ENCODE measurements at regions of chr12 and their contacts with region 1.

Region 1: DNA sequence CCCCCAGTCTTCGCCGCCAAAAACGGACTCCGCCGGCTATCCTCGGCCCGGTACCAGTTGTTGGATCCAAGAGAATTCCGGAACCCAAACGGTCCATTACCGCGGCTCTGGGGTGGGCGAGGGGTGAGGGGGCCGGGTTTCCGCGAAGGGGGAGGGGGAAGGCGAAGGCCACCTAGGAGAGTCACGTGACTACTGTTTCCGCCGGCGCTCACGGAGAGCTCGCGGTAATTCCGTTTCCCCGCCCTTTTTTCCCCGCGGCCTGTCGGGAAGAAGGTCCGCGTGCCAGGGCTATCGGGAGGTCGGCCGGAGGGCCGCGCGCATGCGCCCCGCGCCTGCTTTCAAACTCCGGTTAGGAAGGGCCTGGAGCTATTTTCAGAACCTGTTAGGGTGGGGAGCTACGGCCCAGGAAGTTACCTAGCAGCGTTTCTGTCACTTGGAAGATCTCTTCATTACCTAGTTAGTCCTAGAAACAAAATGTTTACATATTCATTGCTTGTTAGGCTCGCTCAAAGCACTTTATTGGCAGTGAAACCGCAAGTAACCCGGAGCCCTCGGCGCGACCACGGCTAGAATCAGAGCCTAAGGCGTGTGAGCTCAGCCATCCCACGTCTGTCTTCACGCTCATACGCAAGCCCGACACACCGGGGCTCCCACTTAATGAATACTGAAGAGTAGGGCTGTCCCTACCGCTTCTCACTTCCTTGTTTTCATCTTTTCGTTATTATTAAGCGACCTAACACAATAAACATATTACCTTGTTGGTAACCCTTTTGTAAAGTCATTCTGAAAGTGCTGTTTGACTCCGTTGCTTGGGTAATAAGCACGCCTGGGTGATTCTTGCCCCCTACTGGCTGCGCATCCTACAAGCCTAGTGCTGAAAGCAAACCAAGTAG is 624 bp upstream of the SBNO1 start:
- DNase-seq: peak; percentile 98
- ATAC-seq: peak; percentile 82
- H3K4me3 Mint-ChIP-seq: peak overlapping the region; percentile 86
- H3K27ac Mint-ChIP-seq: peak overlapping the region; percentile 98
- H3K4me1 Mint-ChIP-seq: peaks cover 19% of the 10 kb centered on the region
- H3K27me3 Mint-ChIP-seq: no peaks in the 10 kb centered on the region

Region 2: DNA sequence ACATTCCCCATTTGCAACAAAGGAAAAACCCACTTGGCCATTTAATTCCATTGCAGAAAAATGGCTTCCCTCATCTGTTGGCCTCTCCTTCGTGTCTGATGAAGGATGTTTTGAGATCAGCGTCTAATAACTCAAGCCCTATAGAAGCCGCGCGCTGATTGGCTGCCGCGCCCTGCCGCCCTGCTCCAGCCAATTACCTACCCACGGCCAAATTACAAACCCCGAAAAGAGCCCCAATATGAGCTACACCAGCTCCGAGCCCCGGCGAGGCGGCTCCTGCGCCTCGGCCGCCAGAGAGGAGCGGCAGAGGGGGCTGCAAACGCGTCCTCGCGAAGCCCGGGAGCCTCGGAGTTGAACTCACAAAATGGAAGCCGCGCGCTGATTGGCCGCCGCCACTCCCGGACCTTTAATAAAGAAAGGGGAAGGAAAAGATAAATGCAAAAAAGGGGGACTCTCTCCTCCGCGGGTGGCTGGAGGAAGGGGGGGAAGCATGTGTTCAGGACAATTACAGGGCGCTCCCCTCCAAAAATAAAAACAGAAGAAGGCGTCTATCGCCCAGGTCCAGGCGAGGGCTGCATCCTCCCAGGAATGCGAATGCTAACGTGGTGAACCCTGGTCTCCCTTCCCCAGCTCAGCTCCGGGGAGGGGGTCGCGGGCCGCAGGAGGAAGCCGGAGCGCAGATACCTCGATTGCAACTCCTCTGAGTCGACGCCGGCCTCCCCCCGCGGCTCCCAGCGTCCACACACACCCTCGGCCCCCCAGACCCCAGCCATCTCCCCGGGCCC is 1562.2 kb before region 1 on chr12:
- CTCF ChIA-PET with region 1: no interaction called
- POLR2A ChIA-PET with region 1: no interaction called
- intact Hi-C with region 1: loop called in 1 of 2 experiments (anchors 10 kb)
- DNase-seq: peak; percentile 95
- ATAC-seq: peak; percentile 62
- H3K4me3 Mint-ChIP-seq: peak overlapping the region; percentile 88
- H3K27ac Mint-ChIP-seq: peak overlapping the region; percentile 99
- H3K4me1 Mint-ChIP-seq: peaks cover 30% of the 10 kb centered on the region
- H3K27me3 Mint-ChIP-seq: no peaks in the 10 kb centered on the region

Region 3: DNA sequence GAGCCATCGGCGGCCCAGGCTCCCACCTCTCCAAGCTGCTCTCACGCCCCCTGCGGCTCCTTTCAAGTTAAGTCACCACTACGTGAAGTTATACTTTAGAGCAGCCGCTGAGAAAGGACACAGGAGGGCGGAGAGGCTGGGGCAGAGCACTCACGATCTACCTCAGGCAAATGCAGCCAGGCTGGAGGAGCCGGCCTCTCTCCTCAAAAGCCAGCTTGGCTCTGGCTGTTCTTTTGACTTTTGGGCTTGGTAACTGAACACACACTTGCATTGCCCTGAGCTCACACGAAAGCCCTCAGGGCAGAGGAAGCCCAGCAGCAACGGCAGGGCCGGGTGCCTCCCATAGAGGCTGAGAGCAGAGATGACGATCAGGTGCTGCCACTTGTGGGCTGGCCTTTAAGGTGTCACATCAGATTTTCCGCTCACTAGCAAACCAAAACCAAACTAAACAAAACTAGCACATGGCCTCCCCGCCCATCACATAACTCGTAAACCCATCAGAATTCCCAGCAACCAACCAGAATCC is 289.6 kb before region 1 on chr12:
- CTCF ChIA-PET with region 1: no interaction called
- POLR2A ChIA-PET with region 1: interaction called, 3 read pairs
- intact Hi-C with region 1: loop called in 1 of 2 experiments (anchors 1 kb)
- DNase-seq: peak; percentile 87
- ATAC-seq: peak; percentile 75
- H3K4me3 Mint-ChIP-seq: peak overlapping the region; percentile 68
- H3K27ac Mint-ChIP-seq: peak overlapping the region; percentile 94
- H3K4me1 Mint-ChIP-seq: peaks cover 56% of the 10 kb centered on the region
- H3K27me3 Mint-ChIP-seq: no peaks in the 10 kb centered on the region

Region 4: DNA sequence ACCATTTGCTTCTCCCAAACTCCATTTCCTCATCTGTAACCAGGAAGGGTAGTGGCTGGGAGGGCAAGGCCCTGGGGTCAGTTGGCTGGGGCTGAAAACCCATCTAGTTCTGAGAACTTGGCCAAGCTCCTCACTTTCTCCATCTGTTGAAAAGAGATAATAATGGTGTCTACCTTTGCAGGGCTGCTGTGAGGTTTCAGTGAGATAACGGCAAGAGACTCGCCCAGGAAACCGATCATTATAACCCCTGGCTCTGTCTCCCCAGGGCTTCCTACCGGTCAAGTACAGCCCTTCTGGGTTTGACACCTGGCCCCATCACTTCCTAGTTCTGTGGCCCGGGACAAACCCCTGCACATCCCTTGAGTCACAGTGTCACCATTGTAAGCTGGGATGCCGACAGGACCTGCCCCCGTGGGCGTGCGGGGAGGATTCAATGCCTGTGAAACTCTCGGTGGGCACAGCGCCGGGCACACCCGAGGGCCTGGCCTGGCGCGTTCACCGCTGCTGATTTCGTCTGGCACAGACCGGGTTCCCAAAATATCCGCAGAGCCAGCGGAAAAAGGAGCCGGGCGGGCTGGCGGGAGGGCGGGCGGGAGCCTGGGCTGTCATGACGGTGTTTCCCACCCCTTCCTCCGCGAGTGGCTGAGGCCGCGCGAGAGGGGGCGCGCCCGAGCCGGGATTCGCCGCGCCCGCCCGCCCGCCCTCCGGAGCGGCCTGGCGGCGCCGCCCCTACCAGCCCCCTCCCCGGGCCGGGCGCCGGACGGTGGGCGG is 23.1 kb after region 1 on chr12:
- CTCF ChIA-PET with region 1: interaction called, 20 read pairs
- POLR2A ChIA-PET with region 1: interaction called, 35 read pairs
- intact Hi-C with region 1: loop called (anchors 1 kb)
- DNase-seq: peak; percentile 86
- ATAC-seq: peak; percentile 43
- H3K4me3 Mint-ChIP-seq: peak overlapping the region; percentile 76
- H3K27ac Mint-ChIP-seq: peak overlapping the region; percentile 81
- H3K4me1 Mint-ChIP-seq: peaks cover 35% of the 10 kb centered on the region
- H3K27me3 Mint-ChIP-seq: no peaks in the 10 kb centered on the region

Region 5: GRCh38 chr12:123457980-123458783 is 92.9 kb after region 1 on chr12 and contains the start of gene SNRNP35:
- CTCF ChIA-PET with region 1: interaction called, 3 read pairs
- POLR2A ChIA-PET with region 1: interaction called, 4 read pairs
- intact Hi-C with region 1: loop called in 1 of 2 experiments (anchors 1 kb)
- DNase-seq: peak; percentile 88
- ATAC-seq: peak; percentile 73
- H3K4me3 Mint-ChIP-seq: peak within 1 kb of the TSS; percentile 98
- H3K27ac Mint-ChIP-seq: peak within 1 kb of the TSS; percentile 100
- H3K4me1 Mint-ChIP-seq: peaks cover 26% of the 10 kb centered on the region
- H3K27me3 Mint-ChIP-seq: no peaks in the 10 kb centered on the region
- total RNA-seq, gene SNRNP35: 24.1 to 24.8 TPM

Region 6: DNA sequence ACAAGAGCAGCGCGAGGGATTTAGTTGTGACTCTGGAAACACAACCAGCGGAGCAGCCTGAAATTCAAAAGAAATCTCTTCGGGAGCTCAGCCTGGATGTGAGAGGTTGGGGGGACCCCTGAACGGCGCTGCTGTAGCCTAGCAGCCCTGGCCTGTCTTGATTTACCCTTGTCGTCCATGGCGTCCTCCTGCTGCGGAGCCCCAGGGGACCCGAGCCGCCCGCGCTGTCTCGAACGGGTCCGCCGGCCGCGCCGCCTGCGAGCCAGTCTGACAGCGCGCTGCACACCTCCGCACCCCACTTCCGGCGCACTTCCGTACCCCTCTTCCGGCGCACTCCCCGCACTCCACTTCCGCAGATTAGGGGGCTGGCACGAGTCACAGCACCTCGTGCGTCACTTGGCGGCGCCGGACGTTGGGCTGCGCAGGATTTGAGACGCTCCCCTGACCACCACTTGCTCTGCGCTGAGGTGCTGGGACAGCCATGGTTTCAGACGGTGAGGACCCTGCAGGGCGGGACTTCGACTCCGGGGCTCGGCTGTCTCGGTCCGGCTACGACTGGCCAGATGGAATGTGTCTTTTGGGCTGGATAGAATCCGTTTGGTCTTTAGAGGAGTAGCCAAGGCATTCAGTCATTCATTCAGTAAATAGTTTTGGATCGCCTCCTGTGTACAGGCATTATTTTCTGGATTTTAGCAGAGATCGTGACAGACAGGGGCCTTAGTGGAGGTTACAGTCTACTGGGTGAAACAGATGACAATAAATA is 268.3 kb after region 1 on chr12 and contains the starts of genes EIF2B1 and GTF2H3:
- CTCF ChIA-PET with region 1: no interaction called
- POLR2A ChIA-PET with region 1: no interaction called
- intact Hi-C with region 1: loop called in 1 of 2 experiments (anchors 1 kb)
- DNase-seq: peak; percentile 99
- ATAC-seq: peak; percentile 97
- H3K4me3 Mint-ChIP-seq: peak within 1 kb of the TSS; percentile 93
- H3K27ac Mint-ChIP-seq: peak within 1 kb of the TSS; percentile 96
- H3K4me1 Mint-ChIP-seq: peaks cover 19% of the 10 kb centered on the region
- H3K27me3 Mint-ChIP-seq: no peaks in the 10 kb centered on the region
- total RNA-seq, gene EIF2B1: 52.7 to 61.0 TPM
- total RNA-seq, gene GTF2H3: 60.4 to 77.1 TPM

Measured in activated CD4-positive, alpha-beta T cell treated with anti-CD3 and anti-CD28 coated beads for 36 hours (primary cell).